Activated naive CD4-positive, alpha-beta T cell treated with anti-CD3 and anti-CD28 coated beads, Interleukin-2, amount 10 ng/mL, durations not matched to agents 7 days and 5 days (primary cell): ENCODE measurements at regions of chr6 and their contacts with region 1.

Region 1: GRCh38 chr6:159654483-159655098 is 38.5 kb downstream of the SOD2 start:
- DNase-seq: no peak
- H3K4me3 Mint-ChIP-seq: no peak overlapping the region
- H3K27ac Mint-ChIP-seq: no peak overlapping the region
- H3K4me1 Mint-ChIP-seq: no peaks in the 10 kb centered on the region
- H3K27me3 Mint-ChIP-seq: no peaks in the 10 kb centered on the region

Region 2: GRCh38 chr6:159174263-159174969 is 480.2 kb before region 1 on chr6:
- CTCF ChIA-PET with region 1: interaction called, 34 read pairs
- DNase-seq: peak; percentile 79
- H3K4me3 Mint-ChIP-seq: no peak overlapping the region
- H3K27ac Mint-ChIP-seq: no peak overlapping the region
- H3K4me1 Mint-ChIP-seq: peaks cover 14% of the 10 kb centered on the region
- H3K27me3 Mint-ChIP-seq: peaks cover 57% of the 10 kb centered on the region

Region 3: GRCh38 chr6:159252955-159253508 is 401.6 kb before region 1 on chr6:
- CTCF ChIA-PET with region 1: interaction called, 17 read pairs
- DNase-seq: no peak
- H3K4me3 Mint-ChIP-seq: no peak overlapping the region
- H3K27ac Mint-ChIP-seq: no peak overlapping the region
- H3K4me1 Mint-ChIP-seq: no peaks in the 10 kb centered on the region
- H3K27me3 Mint-ChIP-seq: peaks cover 4% of the 10 kb centered on the region

Region 4: GRCh38 chr6:159633196-159633595 is 21.4 kb before region 1 on chr6:
- CTCF ChIA-PET with region 1: interaction called, 14 read pairs
- DNase-seq: peak; percentile 26
- H3K4me3 Mint-ChIP-seq: no peak overlapping the region
- H3K27ac Mint-ChIP-seq: no peak overlapping the region
- H3K4me1 Mint-ChIP-seq: no peaks in the 10 kb centered on the region
- H3K27me3 Mint-ChIP-seq: peaks cover 8% of the 10 kb centered on the region

Region 5: GRCh38 chr6:159739341-159739740 is 84.8 kb after region 1 on chr6:
- CTCF ChIA-PET with region 1: no interaction called
- DNase-seq: no peak
- H3K4me3 Mint-ChIP-seq: no peak overlapping the region
- H3K27ac Mint-ChIP-seq: no peak overlapping the region
- H3K4me1 Mint-ChIP-seq: peaks cover 26% of the 10 kb centered on the region
- H3K27me3 Mint-ChIP-seq: no peaks in the 10 kb centered on the region